Panc1 (cell line): ENCODE measurements at regions of chr4 and their contacts with region 1.

Region 1: GRCh38 chr4:124334119-124334518 is 378.4 kb downstream of the ANKRD50 start:
- DNase-seq: peak; percentile 24
- ATAC-seq: no peak; the same call in 1 of the 2 replicates
- H3K4me3 ChIP-seq: no peak overlapping the region
- H3K27ac ChIP-seq: no peak overlapping the region
- H3K4me1 ChIP-seq: no peaks in the 10 kb centered on the region
- H3K27me3 ChIP-seq: no peaks in the 10 kb centered on the region
- CTCF ChIP-seq: peak; percentile 44; the same call in 1 of the 2 replicates

Region 2: GRCh38 chr4:124386648-124387047 is 52.5 kb after region 1 on chr4:
- CTCF ChIA-PET with region 1: no interaction called
- POLR2A ChIA-PET with region 1: no interaction called
- in situ Hi-C with region 1: no loop called
- intact Hi-C with region 1: no loop called
- DNase-seq: no peak
- ATAC-seq: no peak
- H3K4me3 ChIP-seq: no peak overlapping the region
- H3K27ac ChIP-seq: no peak overlapping the region
- H3K4me1 ChIP-seq: no peaks in the 10 kb centered on the region
- H3K27me3 ChIP-seq: no peaks in the 10 kb centered on the region
- CTCF ChIP-seq: no peak

Region 3: GRCh38 chr4:124833801-124834505 is 499.8 kb after region 1 on chr4:
- CTCF ChIA-PET with region 1: no interaction called
- POLR2A ChIA-PET with region 1: no interaction called
- in situ Hi-C with region 1: no loop called
- intact Hi-C with region 1: no loop called
- DNase-seq: no peak
- ATAC-seq: no peak
- H3K4me3 ChIP-seq: no peak overlapping the region
- H3K27ac ChIP-seq: no peak overlapping the region
- H3K4me1 ChIP-seq: no peaks in the 10 kb centered on the region
- H3K27me3 ChIP-seq: no peaks in the 10 kb centered on the region
- CTCF ChIP-seq: no peak

Region 4: GRCh38 chr4:125244848-125245450 is 910.8 kb after region 1 on chr4:
- CTCF ChIA-PET with region 1: no interaction called
- POLR2A ChIA-PET with region 1: no interaction called
- in situ Hi-C with region 1: no loop called
- intact Hi-C with region 1: loop called (anchors 5 kb)
- DNase-seq: no peak
- ATAC-seq: no peak
- H3K4me3 ChIP-seq: no peak overlapping the region
- H3K27ac ChIP-seq: no peak overlapping the region
- H3K4me1 ChIP-seq: no peaks in the 10 kb centered on the region
- H3K27me3 ChIP-seq: no peaks in the 10 kb centered on the region
- CTCF ChIP-seq: peak; percentile 18; the same call in 1 of the 2 replicates

Region 5: DNA sequence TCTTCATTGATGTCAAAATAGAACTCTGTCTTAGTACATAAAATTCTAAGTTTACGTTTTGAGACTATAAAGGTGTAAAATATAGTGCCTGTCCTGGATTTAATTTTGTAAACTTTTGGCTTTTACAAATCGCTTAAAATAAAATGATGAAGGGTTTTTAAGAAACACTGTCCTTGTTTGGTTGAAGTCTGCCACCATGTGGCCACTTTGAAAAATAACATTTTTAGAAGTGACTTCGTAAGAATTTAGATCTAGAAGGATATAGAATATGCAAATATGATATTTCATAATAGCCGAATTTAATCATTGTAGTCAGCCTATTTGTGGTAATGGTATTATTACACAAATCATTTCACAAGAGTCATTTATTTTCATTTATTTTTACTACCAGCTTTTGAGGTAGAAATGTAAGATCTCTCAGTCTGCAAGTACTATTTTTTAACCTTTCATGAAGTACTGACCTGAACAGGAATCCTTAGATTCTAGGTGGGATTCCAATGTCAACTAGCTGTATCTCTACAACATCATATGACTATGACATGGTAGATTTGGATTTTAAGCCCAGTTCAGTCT is 949.7 kb after region 1 on chr4:
- CTCF ChIA-PET with region 1: interaction called, 6 read pairs
- POLR2A ChIA-PET with region 1: no interaction called
- in situ Hi-C with region 1: no loop called
- intact Hi-C with region 1: loop called (anchors 5 kb)
- DNase-seq: peak; percentile 2
- ATAC-seq: no peak
- H3K4me3 ChIP-seq: no peak overlapping the region
- H3K27ac ChIP-seq: no peak overlapping the region
- H3K4me1 ChIP-seq: no peaks in the 10 kb centered on the region
- H3K27me3 ChIP-seq: no peaks in the 10 kb centered on the region
- CTCF ChIP-seq: peak; percentile 41; the same call in 1 of the 2 replicates